GM18951 (cell line): ENCODE measurements at regions of chr14 and their contacts with region 1.

Region 1: GRCh38 chr14:35416108-35416750 is 11.7 kb upstream of the NFKBIA start:
- POLR2A ChIP-seq: no peak

Region 2: DNA sequence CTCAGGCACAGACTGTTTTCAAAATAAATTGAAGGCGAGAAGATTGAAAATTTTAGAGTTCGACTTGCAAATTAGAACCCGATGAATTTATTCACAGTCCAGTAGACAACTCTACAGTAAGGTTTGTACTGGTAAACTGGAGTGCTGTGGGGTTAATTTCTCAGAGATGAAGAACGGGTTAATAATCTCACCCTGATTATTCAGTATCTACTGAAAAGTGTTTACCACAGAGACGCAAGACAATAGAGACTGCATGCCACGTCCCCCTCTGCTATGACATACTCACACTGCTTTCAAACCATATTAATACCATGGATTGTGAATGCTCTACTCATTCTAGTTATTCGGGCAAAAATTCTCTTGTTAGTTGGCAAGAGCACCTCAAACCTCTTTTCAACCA is 737.9 kb before region 1 on chr14:
- in situ Hi-C with region 1: loop called (anchors 10 kb)
- POLR2A ChIP-seq: no peak

Region 3: GRCh38 chr14:35594616-35595015 is 178.4 kb after region 1 on chr14:
- in situ Hi-C with region 1: no loop called
- POLR2A ChIP-seq: no peak

Region 4: DNA sequence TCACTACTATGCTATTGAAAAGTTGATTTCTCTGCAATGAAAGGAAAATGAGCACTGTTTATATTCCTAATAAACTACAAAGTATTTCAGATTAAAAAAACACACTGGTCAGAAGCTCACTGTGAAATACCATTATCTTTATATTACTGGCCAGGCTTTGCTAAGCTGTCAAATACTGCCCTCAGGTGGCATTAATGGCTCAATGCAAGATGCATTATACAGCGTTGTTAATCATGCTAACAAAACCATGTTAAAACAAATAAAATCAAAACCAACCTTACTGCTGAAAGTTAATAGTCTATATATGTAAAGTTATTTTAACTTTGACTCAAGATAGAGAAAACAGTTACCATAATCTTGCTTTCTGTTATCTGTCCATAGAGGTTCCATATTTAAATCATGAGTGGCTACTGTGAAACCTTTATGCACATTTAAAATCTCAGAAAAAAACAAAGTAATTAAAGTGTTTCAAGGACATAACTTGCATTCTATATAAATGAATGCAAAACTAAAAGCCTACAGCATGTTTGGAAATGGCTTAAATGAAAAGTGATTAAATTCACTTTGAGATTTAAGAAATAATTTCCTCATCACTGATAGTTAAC is 271.2 kb after region 1 on chr14:
- in situ Hi-C with region 1: loop called (anchors 10 kb)
- POLR2A ChIP-seq: no peak